ENCODE measurements at regions of chr13 and their contacts with region 1.

Region 1: DNA sequence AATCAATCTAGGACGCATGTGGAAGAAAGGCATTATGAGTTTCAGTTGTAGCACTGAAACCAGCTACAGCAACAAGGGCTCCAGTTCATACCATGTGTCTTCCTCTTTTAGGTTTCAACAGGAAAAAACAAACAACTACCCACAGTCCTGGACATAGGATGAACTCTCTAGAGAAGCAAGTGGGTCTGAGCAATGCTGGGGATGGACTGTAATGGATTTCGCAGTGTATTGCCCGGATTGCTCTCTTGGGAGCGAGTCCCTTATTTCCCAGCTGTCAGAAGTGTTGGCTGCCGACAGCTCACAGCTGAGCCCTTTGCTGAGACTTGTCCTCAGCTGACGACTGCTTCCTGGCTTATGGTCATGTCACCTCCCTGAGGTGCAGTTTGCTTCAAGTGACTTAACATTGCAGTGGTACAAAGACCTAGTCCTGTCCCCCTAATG is 12.1 kb upstream of the MYCBP2 start:
- DNase-seq: peak; percentile 42
- ATAC-seq: peak; percentile 69
- H3K4me3 Mint-ChIP-seq: peak overlapping the region; percentile 79
- H3K27ac Mint-ChIP-seq: peak overlapping the region; percentile 95
- H3K4me1 Mint-ChIP-seq: peaks cover 80% of the 10 kb centered on the region
- H3K27me3 Mint-ChIP-seq: no peaks in the 10 kb centered on the region
- CTCF ChIP-seq: no peak

Region 2: DNA sequence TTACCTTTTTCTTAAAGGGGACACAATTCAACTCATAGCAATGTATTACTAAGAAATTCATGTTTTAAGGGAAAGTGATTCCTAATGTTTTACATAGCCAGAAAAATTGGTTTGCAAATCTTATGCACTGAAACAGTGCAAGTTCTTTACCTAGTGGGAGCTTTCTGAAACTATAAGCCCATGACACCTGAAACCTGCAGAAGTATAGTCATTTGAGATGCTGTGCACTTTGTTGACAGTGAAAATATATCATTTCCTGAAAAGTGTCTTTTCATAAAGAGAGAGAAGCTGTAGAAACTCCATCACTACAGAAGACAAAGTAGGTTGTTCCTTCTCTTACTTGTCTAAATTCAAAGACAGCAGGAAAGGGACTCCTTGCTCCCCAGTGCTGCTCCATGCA is 1185.7 kb before region 1 on chr13:
- CTCF ChIA-PET with region 1: no interaction called
- POLR2A ChIA-PET with region 1: no interaction called
- intact Hi-C with region 1: no loop called
- DNase-seq: no peak
- ATAC-seq: no peak
- H3K4me3 Mint-ChIP-seq: no peak overlapping the region
- H3K27ac Mint-ChIP-seq: no peak overlapping the region
- H3K4me1 Mint-ChIP-seq: no peaks in the 10 kb centered on the region
- H3K27me3 Mint-ChIP-seq: no peaks in the 10 kb centered on the region
- CTCF ChIP-seq: no peak

Region 3: DNA sequence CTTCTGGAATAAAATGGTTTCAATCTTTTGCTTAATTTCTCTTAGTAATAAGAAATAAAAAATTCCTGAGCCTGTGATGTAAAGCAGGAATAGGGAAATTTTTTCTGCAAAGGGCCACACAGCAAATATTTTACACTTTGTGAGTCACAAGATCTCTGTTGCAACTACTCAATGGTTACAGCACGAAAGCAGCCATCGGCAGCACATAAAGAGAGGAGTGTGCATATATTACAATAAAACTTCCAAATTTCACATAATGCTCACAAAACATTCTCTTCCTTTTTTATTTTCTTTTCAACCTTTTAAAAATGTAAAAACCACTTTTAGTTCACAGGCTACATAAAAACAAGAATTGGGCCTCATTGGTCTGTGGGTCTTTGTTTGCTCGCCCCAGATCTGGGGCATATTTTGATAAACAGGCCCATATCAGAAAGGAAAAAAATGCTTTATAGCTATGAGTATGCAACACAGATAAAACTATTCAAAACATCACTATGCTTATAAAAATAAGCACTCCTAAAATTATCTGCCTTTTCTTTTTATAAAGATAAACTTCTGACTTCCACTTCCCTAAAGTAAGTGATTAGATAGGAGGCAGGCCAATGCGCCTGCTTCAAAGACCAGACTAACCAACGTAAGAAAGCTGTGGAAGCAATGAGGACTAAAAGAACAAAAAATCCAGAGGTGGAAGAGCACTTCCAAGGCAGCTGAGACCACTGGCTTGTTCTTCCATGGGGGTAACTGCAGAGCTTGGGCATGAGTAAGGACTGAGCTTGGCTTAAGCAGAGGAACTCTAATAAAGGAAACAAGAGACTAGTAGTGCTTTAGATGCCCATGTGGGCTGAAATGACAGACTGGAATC is 38.6 kb before region 1 on chr13:
- CTCF ChIA-PET with region 1: no interaction called
- POLR2A ChIA-PET with region 1: interaction called, 11 read pairs
- intact Hi-C with region 1: no loop called
- DNase-seq: no peak
- ATAC-seq: peak; percentile 46
- H3K4me3 Mint-ChIP-seq: peak overlapping the region; percentile 57
- H3K27ac Mint-ChIP-seq: peak overlapping the region; percentile 87
- H3K4me1 Mint-ChIP-seq: peaks cover 84% of the 10 kb centered on the region
- H3K27me3 Mint-ChIP-seq: no peaks in the 10 kb centered on the region
- CTCF ChIP-seq: no peak

Region 4: GRCh38 chr13:77353995-77354394 is 15.0 kb after region 1 on chr13:
- CTCF ChIA-PET with region 1: no interaction called
- POLR2A ChIA-PET with region 1: interaction called, 4 read pairs
- intact Hi-C with region 1: loop called (anchors 1 kb)
- DNase-seq: no peak
- ATAC-seq: peak; percentile 86
- H3K4me3 Mint-ChIP-seq: peak overlapping the region; percentile 36
- H3K27ac Mint-ChIP-seq: peak overlapping the region; percentile 88
- H3K4me1 Mint-ChIP-seq: peaks cover 36% of the 10 kb centered on the region
- H3K27me3 Mint-ChIP-seq: no peaks in the 10 kb centered on the region
- CTCF ChIP-seq: no peak

Region 5: GRCh38 chr13:77415253-77416071 is 76.5 kb after region 1 on chr13:
- CTCF ChIA-PET with region 1: no interaction called
- POLR2A ChIA-PET with region 1: interaction called, 9 read pairs
- intact Hi-C with region 1: loop called (anchors 1 kb)
- DNase-seq: no peak
- ATAC-seq: peak; percentile 86
- H3K4me3 Mint-ChIP-seq: peak overlapping the region; percentile 11
- H3K27ac Mint-ChIP-seq: peak overlapping the region; percentile 89
- H3K4me1 Mint-ChIP-seq: peaks cover 35% of the 10 kb centered on the region
- H3K27me3 Mint-ChIP-seq: no peaks in the 10 kb centered on the region
- CTCF ChIP-seq: no peak

Region 6: DNA sequence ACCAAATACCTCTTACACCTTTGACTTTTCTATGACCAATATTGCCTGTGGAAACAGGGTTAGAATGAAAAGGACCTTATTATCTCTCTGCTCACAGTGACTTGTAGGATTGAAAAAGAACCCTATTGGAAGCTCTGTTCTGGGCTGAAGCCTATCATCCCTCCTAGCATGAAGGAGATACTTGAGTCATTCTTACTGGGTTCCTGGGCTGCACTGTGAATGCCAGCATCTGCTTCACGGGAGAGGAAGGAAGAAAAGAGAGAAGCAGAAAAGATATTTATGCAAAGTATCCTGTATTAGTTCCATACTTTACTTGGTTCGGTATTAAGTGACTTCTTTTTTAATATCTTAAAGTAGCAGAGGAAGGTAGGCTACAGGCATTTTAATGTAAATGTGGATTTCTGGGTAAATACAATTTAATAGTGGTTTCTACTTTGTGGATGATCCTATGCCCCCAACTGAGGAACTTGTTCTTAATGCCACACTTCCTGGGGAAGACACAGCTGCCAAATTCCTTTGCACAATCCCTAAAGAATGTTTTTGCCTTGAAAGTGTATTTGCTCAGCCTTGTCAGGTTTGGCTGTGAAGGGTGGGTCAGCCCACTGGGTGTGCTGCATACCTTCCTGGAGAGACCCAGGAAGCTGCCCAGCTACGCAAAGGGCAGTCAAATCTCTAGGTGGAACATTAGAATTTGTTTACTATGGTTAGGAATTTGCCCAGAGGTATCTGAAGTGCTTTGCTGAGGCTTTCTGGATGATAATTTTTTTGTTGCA is 182.8 kb after region 1 on chr13:
- CTCF ChIA-PET with region 1: no interaction called
- POLR2A ChIA-PET with region 1: no interaction called
- intact Hi-C with region 1: no loop called
- DNase-seq: no peak
- ATAC-seq: no peak
- H3K4me3 Mint-ChIP-seq: no peak overlapping the region
- H3K27ac Mint-ChIP-seq: no peak overlapping the region
- H3K4me1 Mint-ChIP-seq: no peaks in the 10 kb centered on the region
- H3K27me3 Mint-ChIP-seq: no peaks in the 10 kb centered on the region
- CTCF ChIP-seq: no peak

Measured in activated B cell treated with CpG ODN at 0.5 μM for 24 hours (primary cell).